Aorta (tissue), 5 donors: ENCODE measurements at regions of chr4 and their contacts with region 1.

Region 1: GRCh38 chr4:55395529-55396307 is at the start of gene TMEM165:
- DNase-seq: peak; percentile 95 to 97
- ATAC-seq: peak; percentile 96
- H3K4me3 ChIP-seq: peak within 1 kb of the TSS; percentile 97 to 99
- H3K27ac ChIP-seq: peak within 1 kb of the TSS; percentile 95 to 98
- H3K4me1 ChIP-seq: no peaks in the 10 kb centered on the region
- H3K27me3 ChIP-seq: no peaks in the 10 kb centered on the region
- total RNA-seq, gene TMEM165: 183 to 204 TPM

Region 2: DNA sequence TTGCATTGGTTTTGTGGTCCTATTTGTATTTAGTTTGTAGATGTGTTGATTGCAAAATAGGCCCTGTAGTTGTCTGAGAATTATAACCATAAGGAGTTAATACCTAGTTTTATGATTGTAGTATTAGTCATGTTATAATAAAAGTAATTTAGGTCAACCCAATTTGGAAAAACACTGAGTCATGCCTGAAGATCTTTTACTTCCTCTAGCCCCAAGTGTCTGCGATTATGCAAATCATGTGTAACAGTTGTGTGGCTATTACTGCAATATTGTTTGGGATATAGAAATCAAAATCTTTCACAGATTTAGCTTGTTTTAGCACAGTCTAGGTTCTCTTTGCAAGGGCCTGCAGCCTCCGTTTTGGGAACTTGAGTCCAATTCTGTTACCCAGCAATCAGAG is 37.0 kb before region 1 on chr4:
- intact Hi-C with region 1: loop called in 1 of 2 experiments (anchors 2 kb)
- DNase-seq: no peak
- ATAC-seq: peak; percentile 89
- H3K4me3 ChIP-seq: no peak overlapping the region
- H3K27ac ChIP-seq: peak overlapping the region; percentile 17 to 85
- H3K4me1 ChIP-seq: no peaks in the 10 kb centered on the region
- H3K27me3 ChIP-seq: no peaks in the 10 kb centered on the region